ENCODE measurements at regions of chr6 and their contacts with region 1.

Region 1: GRCh38 chr6:157184202-157185020 is 138.9 kb downstream of the TMEM242 start:
- DNase-seq: no peak
- H3K4me3 ChIP-seq: no peak overlapping the region
- H3K27ac ChIP-seq: peak overlapping the region; percentile 27
- H3K4me1 ChIP-seq: peaks cover 25% of the 10 kb centered on the region
- H3K27me3 ChIP-seq: no peaks in the 10 kb centered on the region
- CTCF ChIP-seq: peak; percentile 69 to 87 (median 83)
- POLR2A ChIP-seq: no peak

Region 2: GRCh38 chr6:156564127-156564806 is 620.1 kb before region 1 on chr6:
- intact Hi-C with region 1: loop called (anchors 5 kb)
- DNase-seq: no peak
- H3K4me3 ChIP-seq: no peak overlapping the region
- H3K27ac ChIP-seq: no peak overlapping the region
- H3K4me1 ChIP-seq: no peaks in the 10 kb centered on the region
- H3K27me3 ChIP-seq: no peaks in the 10 kb centered on the region
- CTCF ChIP-seq: peak; percentile 89 to 90 (median 89)
- POLR2A ChIP-seq: no peak

Region 3: DNA sequence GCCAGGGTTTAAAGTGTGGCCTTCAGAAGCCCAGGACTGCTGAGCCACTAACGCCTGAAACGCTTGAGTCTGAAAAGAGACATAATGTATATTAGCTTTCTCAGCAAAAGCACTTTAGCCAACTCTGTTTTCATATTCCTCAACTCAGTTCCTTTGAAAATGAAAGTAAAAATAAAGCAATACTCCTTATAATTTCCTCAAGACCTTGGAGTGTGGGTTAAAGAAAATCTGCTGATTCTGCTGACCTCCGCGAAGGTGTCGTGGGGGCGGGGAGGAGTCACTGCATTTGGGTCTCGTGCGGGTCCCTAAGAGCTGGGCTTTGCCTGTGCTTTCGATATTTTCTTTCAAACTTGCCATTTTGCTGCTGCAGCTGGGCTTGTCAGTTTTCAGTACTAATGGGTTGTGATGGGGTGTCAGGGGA is 549.5 kb before region 1 on chr6:
- intact Hi-C with region 1: no loop called
- DNase-seq: no peak
- H3K4me3 ChIP-seq: peak overlapping the region; percentile 10 to 25
- H3K27ac ChIP-seq: no peak overlapping the region
- H3K4me1 ChIP-seq: no peaks in the 10 kb centered on the region
- H3K27me3 ChIP-seq: no peaks in the 10 kb centered on the region
- CTCF ChIP-seq: no peak
- POLR2A ChIP-seq: no peak

Region 4: DNA sequence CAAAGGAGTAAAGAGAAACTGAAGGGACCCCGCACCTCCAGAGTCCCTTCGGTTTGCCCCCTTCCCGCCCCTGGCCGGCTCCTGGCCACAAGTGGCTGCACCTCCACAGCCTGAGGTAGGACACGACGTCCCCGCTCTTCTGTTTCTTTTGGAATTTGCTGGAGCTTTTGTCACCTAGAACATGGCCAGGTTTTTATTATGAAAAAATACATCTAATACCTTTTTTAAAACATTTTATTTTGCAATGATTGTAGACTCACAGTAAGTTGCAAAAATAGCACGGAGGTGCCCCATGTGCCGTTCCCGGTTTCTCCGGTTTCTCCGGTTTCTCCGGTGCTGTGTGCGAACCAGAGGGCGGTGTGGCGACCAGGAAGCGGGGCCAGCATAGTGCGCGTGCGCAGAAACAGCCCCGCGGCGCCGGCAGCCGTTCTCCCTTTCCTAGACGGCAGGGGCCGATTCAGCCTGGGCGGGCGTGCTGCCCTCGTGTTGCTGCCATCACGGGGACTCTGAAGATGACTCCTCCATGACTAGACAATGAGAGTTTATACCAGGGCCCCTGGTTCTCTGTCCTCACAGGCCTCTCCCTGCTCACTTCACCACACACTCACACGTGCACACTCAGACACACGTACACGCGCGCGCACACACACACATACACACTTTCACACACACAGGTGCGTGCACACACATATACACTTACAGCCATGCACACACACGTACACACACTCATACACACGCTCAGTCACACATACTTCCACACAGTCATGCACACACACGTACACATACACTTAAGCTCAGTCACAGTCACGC is 36.8 kb after region 1 on chr6:
- intact Hi-C with region 1: loop called (anchors 2 kb)
- DNase-seq: peak; percentile 87 to 96
- H3K4me3 ChIP-seq: peak overlapping the region; percentile 36 to 38
- H3K27ac ChIP-seq: peak overlapping the region; percentile 18
- H3K4me1 ChIP-seq: peaks cover 7% of the 10 kb centered on the region
- H3K27me3 ChIP-seq: no peaks in the 10 kb centered on the region
- CTCF ChIP-seq: no peak
- POLR2A ChIP-seq: no peak

Measured in vagina (tissue), 2 donors.